ENCODE measurements at regions of chr1 and their contacts with region 1.

Region 1: GRCh38 chr1:42173155-42173933 is 8.8 kb upstream of the GUCA2A start:
- DNase-seq: peak; percentile 52
- H3K4me3 ChIP-seq: no peak overlapping the region
- H3K27ac ChIP-seq: no peak overlapping the region
- H3K4me1 ChIP-seq: peaks cover 17% of the 10 kb centered on the region
- H3K27me3 ChIP-seq: no peaks in the 10 kb centered on the region
- CTCF ChIP-seq: peak; percentile 97 to 98
- POLR2A ChIP-seq: no peak

Region 2: GRCh38 chr1:41516168-41517061 is 656.9 kb before region 1 on chr1:
- CTCF ChIA-PET with region 1: interaction called, 12 read pairs
- POLR2A ChIA-PET with region 1: no interaction called
- dilution Hi-C with region 1: no loop called
- intact Hi-C with region 1: no loop called
- DNase-seq: peak; percentile 91
- H3K4me3 ChIP-seq: peak overlapping the region in 2 of 3 experiments; percentile 13 to 14
- H3K27ac ChIP-seq: no peak overlapping the region
- H3K4me1 ChIP-seq: peaks cover 4% of the 10 kb centered on the region
- H3K27me3 ChIP-seq: no peaks in the 10 kb centered on the region
- CTCF ChIP-seq: peak; percentile 94 to 99
- POLR2A ChIP-seq: no peak

Region 3: GRCh38 chr1:41812051-41812450 is 361.3 kb before region 1 on chr1:
- CTCF ChIA-PET with region 1: interaction called, 37 read pairs
- POLR2A ChIA-PET with region 1: no interaction called
- dilution Hi-C with region 1: no loop called
- intact Hi-C with region 1: loop called (anchors 1 kb)
- DNase-seq: peak; percentile 72
- H3K4me3 ChIP-seq: no peak overlapping the region
- H3K27ac ChIP-seq: peak overlapping the region; percentile 95
- H3K4me1 ChIP-seq: peaks cover 17% of the 10 kb centered on the region
- H3K27me3 ChIP-seq: no peaks in the 10 kb centered on the region
- CTCF ChIP-seq: peak; percentile 75 to 82
- POLR2A ChIP-seq: no peak

Region 4: GRCh38 chr1:42146626-42147320 is 26.6 kb before region 1 on chr1:
- CTCF ChIA-PET with region 1: interaction called, 58 read pairs
- POLR2A ChIA-PET with region 1: no interaction called
- dilution Hi-C with region 1: no loop called
- intact Hi-C with region 1: loop called (anchors 1 kb)
- DNase-seq: peak; percentile 49
- H3K4me3 ChIP-seq: no peak overlapping the region
- H3K27ac ChIP-seq: no peak overlapping the region
- H3K4me1 ChIP-seq: no peaks in the 10 kb centered on the region
- H3K27me3 ChIP-seq: peaks cover 21 to 22% of the 10 kb centered on the region in 2 experiments
- CTCF ChIP-seq: peak; percentile 74 to 91
- POLR2A ChIP-seq: no peak

Region 5: GRCh38 chr1:42157667-42158066 is 15.7 kb before region 1 on chr1:
- CTCF ChIA-PET with region 1: interaction called, 31 read pairs
- POLR2A ChIA-PET with region 1: no interaction called
- dilution Hi-C with region 1: no loop called
- intact Hi-C with region 1: no loop called
- DNase-seq: no peak
- H3K4me3 ChIP-seq: no peak overlapping the region
- H3K27ac ChIP-seq: no peak overlapping the region
- H3K4me1 ChIP-seq: no peaks in the 10 kb centered on the region
- H3K27me3 ChIP-seq: peaks cover 3 to 16% of the 10 kb centered on the region in 2 experiments
- CTCF ChIP-seq: no peak
- POLR2A ChIP-seq: no peak

Region 6: GRCh38 chr1:42319128-42319851 is 145.9 kb after region 1 on chr1:
- CTCF ChIA-PET with region 1: interaction called, 12 read pairs
- POLR2A ChIA-PET with region 1: no interaction called
- dilution Hi-C with region 1: no loop called
- intact Hi-C with region 1: no loop called
- DNase-seq: peak; percentile 43
- H3K4me3 ChIP-seq: peak overlapping the region in 1 of 3 experiments; percentile 51
- H3K27ac ChIP-seq: peak overlapping the region; percentile 35
- H3K4me1 ChIP-seq: peaks cover 46% of the 10 kb centered on the region
- H3K27me3 ChIP-seq: no peaks in the 10 kb centered on the region
- CTCF ChIP-seq: no peak
- POLR2A ChIP-seq: no peak

Region 7: DNA sequence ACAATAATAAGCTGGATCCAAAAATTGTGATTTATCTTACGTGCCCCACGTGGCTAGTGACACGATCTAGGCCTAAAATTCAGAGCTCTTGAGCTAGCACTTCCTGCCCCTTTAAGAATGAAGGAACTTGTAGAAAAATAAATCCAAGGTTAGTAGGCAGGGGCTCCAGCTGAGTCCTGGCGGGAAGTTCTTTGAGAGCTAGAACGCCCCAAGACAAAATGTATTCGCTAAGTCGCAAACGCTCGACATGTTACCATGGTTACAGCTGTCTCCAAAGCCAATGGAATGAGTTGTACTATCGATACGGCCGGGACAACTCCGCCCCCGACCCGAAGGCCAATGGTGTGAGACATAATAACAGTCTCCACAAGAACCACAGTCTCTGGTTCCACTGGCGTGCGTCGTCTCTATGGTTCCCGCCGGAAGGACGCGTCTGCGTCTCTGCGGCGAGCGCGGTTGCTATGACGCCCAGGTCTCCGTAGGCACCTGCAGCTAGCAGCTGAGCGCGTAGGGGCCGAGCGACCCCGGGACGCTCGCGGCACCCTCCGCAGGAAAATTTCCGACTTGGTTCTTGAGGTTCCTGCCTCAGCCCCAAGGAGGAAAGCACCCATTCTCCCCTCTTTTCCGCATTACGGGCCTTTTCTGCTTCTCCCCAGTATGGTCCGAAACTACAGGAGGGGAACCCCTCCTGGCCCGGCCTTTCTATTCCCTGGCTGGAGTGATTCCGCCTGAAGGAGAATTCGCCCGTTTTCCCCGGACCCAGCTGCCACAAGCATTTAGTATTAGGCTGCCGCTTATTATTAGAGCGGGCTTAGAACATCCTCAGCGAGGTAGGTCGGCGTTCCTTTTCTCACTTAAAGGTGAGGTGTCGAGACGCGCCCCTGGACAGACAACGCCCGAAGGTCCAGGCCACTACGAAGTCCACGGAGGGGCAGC is 289.8 kb after region 1 on chr1 and contains the start of gene CCDC30:
- CTCF ChIA-PET with region 1: interaction called, 3 read pairs
- POLR2A ChIA-PET with region 1: no interaction called
- dilution Hi-C with region 1: no loop called
- intact Hi-C with region 1: loop called (anchors 2 kb)
- DNase-seq: peak; percentile 99
- H3K4me3 ChIP-seq: peak within 1 kb of the TSS; percentile 57 to 79 (median 67)
- H3K27ac ChIP-seq: peak within 1 kb of the TSS; percentile 24
- H3K4me1 ChIP-seq: peaks cover 7% of the 10 kb centered on the region
- H3K27me3 ChIP-seq: peaks cover under 1 to 3% of the 10 kb centered on the region in 2 experiments
- CTCF ChIP-seq: no peak
- POLR2A ChIP-seq: no peak
- total RNA-seq, gene CCDC30: 1.5 and 2.9 TPM in 2 replicates

Measured in endothelial cell of umbilical vein (primary cell).